ENCODE measurements at regions of chr16 and their contacts with region 1.

Region 1: GRCh38 chr16:48623304-48624016 is 13.5 kb upstream of the N4BP1 start:
- DNase-seq: peak; percentile 95 to 97 (median 97)
- H3K4me3 ChIP-seq: peak overlapping the region; percentile 72 to 78 (median 77)
- H3K4me3 Mint-ChIP-seq: peak overlapping the region; percentile 87 to 93
- H3K27ac ChIP-seq: peak overlapping the region; percentile 87 to 94
- H3K27ac Mint-ChIP-seq: peak overlapping the region; percentile 97 to 99 (median 98)
- H3K4me1 ChIP-seq: peaks cover 42 to 43% of the 10 kb centered on the region in 2 donors
- H3K4me1 Mint-ChIP-seq: peaks cover 48% of the 10 kb centered on the region
- H3K27me3 ChIP-seq: no peaks in the 10 kb centered on the region
- H3K27me3 Mint-ChIP-seq: no peaks in the 10 kb centered on the region
- CTCF ChIP-seq: peak; percentile 99

Region 2: GRCh38 chr16:48365581-48366164 is 257.8 kb before region 1 on chr16:
- intact Hi-C with region 1: no loop called
- DNase-seq: peak; percentile 73 to 82 (median 76)
- H3K4me3 ChIP-seq: peak overlapping the region; percentile 65 to 96 (median 84)
- H3K4me3 Mint-ChIP-seq: peak overlapping the region; percentile 73 to 93
- H3K27ac ChIP-seq: peak overlapping the region; percentile 88 to 96
- H3K27ac Mint-ChIP-seq: peak overlapping the region; percentile 88 to 95 (median 90)
- H3K4me1 ChIP-seq: peaks cover 29 to 38% of the 10 kb centered on the region in 2 donors
- H3K4me1 Mint-ChIP-seq: peaks cover 48% of the 10 kb centered on the region
- H3K27me3 ChIP-seq: no peaks in the 10 kb centered on the region
- H3K27me3 Mint-ChIP-seq: no peaks in the 10 kb centered on the region
- CTCF ChIP-seq: no peak

Region 3: DNA sequence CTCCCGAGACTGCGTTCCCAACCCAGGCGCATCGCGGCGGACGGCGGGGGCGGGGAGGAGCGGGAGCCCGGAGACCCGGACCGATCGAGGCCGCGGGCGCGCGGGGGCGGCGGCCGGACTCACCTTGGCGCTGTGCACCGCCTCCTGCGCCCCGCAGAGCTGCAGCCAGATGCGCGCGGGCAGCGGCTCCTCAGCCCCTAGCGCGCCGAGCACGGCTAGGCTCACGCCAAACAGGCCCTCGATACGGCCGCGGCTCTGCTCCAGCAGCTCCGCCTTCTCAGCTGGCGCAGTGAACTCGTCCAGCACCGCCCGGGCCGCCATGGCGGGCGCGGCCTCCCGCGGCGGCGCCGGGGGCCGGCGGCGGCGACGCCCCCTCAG is 13.8 kb before region 1 on chr16:
- intact Hi-C with region 1: loop called in 1 of 2 experiments (anchors 1 kb)
- DNase-seq: peak in 1 of 3 donors; percentile 40
- H3K4me3 ChIP-seq: peak overlapping the region; percentile 61 to 95 (median 94)
- H3K4me3 Mint-ChIP-seq: peak overlapping the region; percentile 90 to 93
- H3K27ac ChIP-seq: peak overlapping the region; percentile 45 to 88
- H3K27ac Mint-ChIP-seq: peak overlapping the region in 5 of 7 donors; percentile 84 to 94 (median 92)
- H3K4me1 ChIP-seq: peaks cover 82 to 89% of the 10 kb centered on the region in 2 donors
- H3K4me1 Mint-ChIP-seq: peaks cover 35% of the 10 kb centered on the region
- H3K27me3 ChIP-seq: no peaks in the 10 kb centered on the region
- H3K27me3 Mint-ChIP-seq: peaks cover 0 to 2% (median 0%) of the 10 kb centered on the region in 3 donors
- CTCF ChIP-seq: no peak

Region 4: GRCh38 chr16:48676836-48677235 is 53.4 kb after region 1 on chr16:
- intact Hi-C with region 1: no loop called
- DNase-seq: no peak
- H3K4me3 ChIP-seq: no peak overlapping the region
- H3K4me3 Mint-ChIP-seq: no peak overlapping the region
- H3K27ac ChIP-seq: no peak overlapping the region
- H3K27ac Mint-ChIP-seq: no peak overlapping the region
- H3K4me1 ChIP-seq: no peaks in the 10 kb centered on the region
- H3K4me1 Mint-ChIP-seq: no peaks in the 10 kb centered on the region
- H3K27me3 ChIP-seq: no peaks in the 10 kb centered on the region
- H3K27me3 Mint-ChIP-seq: peaks cover 0 to 10% (median 0%) of the 10 kb centered on the region in 3 donors
- CTCF ChIP-seq: no peak